ENCODE measurements at regions of chr2 and their contacts with region 1.

Region 1: GRCh38 chr2:197705121-197705911 is at the start of gene MARS2:
- DNase-seq: peak; percentile 95
- H3K4me3 ChIP-seq: peak within 1 kb of the TSS; percentile 90
- H3K27ac ChIP-seq: peak within 1 kb of the TSS; percentile 47
- H3K4me1 ChIP-seq: peaks cover 26% of the 10 kb centered on the region
- CTCF ChIP-seq: no peak
- total RNA-seq, gene MARS2: 23.2 and 32.7 TPM in 2 replicates

Region 2: GRCh38 chr2:196639180-196640030 is 1065.9 kb before region 1 on chr2 and contains the start of gene CCDC150:
- CTCF ChIA-PET with region 1: no interaction called
- POLR2A ChIA-PET with region 1: no interaction called
- intact Hi-C with region 1: loop called (anchors 10 kb)
- DNase-seq: peak; percentile 96
- H3K4me3 ChIP-seq: peak within 1 kb of the TSS; percentile 95
- H3K27ac ChIP-seq: no peak within 1 kb of the TSS
- H3K4me1 ChIP-seq: peaks cover 11% of the 10 kb centered on the region
- CTCF ChIP-seq: 0 out of 2 replicates have a peak, but pooled peaks have one; percentile 19
- total RNA-seq, gene CCDC150: 39.5 and 40.8 TPM in 2 replicates

Region 3: GRCh38 chr2:197434541-197435513 is 270.5 kb before region 1 on chr2 and contains the start of gene SF3B1:
- CTCF ChIA-PET with region 1: no interaction called
- POLR2A ChIA-PET with region 1: interaction called, 6 read pairs
- intact Hi-C with region 1: loop called (anchors 5 kb)
- DNase-seq: peak; percentile 99
- H3K4me3 ChIP-seq: peak within 1 kb of the TSS; percentile 99
- H3K27ac ChIP-seq: peak within 1 kb of the TSS; percentile 76
- H3K4me1 ChIP-seq: peaks cover 42% of the 10 kb centered on the region
- CTCF ChIP-seq: no peak
- total RNA-seq, gene SF3B1: 162 and 198 TPM in 2 replicates

Region 4: DNA sequence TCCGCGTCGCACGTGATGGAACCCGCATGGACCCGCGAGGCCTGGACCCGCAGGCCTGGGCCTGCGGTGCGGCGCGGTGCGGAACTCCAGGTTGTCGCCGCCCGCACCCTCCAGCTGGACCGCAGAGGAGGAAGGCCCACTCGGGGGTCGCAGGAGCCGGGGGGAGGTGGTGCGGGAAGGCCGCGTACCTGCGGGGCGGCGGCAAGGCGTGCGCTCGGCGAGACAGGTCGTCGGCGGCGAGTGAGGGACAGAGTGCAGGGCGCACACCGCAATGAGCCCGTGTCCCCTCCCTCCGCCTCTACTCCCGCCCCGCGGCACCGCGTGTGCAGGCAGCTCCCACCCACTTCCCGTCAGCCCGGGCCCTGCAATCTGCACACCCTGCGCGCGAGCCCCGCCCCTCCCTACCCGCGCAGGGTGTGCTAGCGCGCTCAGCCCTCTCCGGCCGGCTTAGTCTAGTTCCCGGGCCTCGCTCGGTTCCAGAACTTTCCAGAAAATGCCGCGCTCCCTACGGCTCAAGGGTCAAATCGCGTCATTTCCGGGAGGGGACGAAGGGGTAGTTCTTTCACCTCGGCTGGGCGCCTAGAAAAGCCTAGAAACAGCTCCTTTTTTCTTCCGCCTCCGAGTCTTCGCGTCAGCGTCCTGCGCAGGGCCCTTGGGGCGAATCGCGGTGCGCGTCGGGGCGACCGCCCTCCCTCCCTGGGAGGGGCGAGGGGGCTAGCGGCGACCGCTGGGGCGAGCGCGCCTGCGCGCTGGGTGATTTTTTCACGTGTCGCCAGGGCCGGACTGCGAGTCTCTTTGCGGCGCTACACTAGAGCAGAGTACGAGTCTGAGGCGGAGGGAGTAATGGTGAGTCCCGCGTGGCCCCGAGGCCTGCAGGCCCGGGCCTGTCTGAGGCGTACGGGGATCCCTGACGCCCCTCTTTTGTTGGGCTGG is 205.5 kb before region 1 on chr2 and contains the starts of genes HSPD1 and HSPE1:
- CTCF ChIA-PET with region 1: interaction called, 3 read pairs
- POLR2A ChIA-PET with region 1: interaction called, 5 read pairs
- intact Hi-C with region 1: loop called (anchors 2 kb)
- DNase-seq: peak; percentile 99
- H3K4me3 ChIP-seq: peak within 1 kb of the TSS; percentile 83
- H3K27ac ChIP-seq: peak within 1 kb of the TSS; percentile 77
- H3K4me1 ChIP-seq: peaks cover 55% of the 10 kb centered on the region
- CTCF ChIP-seq: no peak
- total RNA-seq, gene HSPD1: 370 and 405 TPM in 2 replicates
- total RNA-seq, gene HSPE1: 189 and 314 TPM in 2 replicates

Region 5: GRCh38 chr2:197777823-197778407 is 72.6 kb after region 1 on chr2:
- CTCF ChIA-PET with region 1: interaction called, 3 read pairs
- POLR2A ChIA-PET with region 1: no interaction called
- intact Hi-C with region 1: loop called (anchors 1 kb)
- DNase-seq: peak; percentile 47
- H3K4me3 ChIP-seq: no peak overlapping the region
- H3K27ac ChIP-seq: no peak overlapping the region
- H3K4me1 ChIP-seq: no peaks in the 10 kb centered on the region
- CTCF ChIP-seq: peak; percentile 98

Region 6: GRCh38 chr2:197799068-197799467 is 93.8 kb after region 1 on chr2:
- CTCF ChIA-PET with region 1: no interaction called
- POLR2A ChIA-PET with region 1: no interaction called
- intact Hi-C with region 1: no loop called
- DNase-seq: no peak
- H3K4me3 ChIP-seq: no peak overlapping the region
- H3K27ac ChIP-seq: no peak overlapping the region
- H3K4me1 ChIP-seq: peaks cover 2% of the 10 kb centered on the region
- CTCF ChIP-seq: no peak

Region 7: GRCh38 chr2:197838036-197838435 is 132.7 kb after region 1 on chr2:
- CTCF ChIA-PET with region 1: no interaction called
- POLR2A ChIA-PET with region 1: no interaction called
- intact Hi-C with region 1: no loop called
- DNase-seq: no peak
- H3K4me3 ChIP-seq: no peak overlapping the region
- H3K27ac ChIP-seq: no peak overlapping the region
- H3K4me1 ChIP-seq: no peaks in the 10 kb centered on the region
- CTCF ChIP-seq: no peak

Measured in OCI-LY7 (cell line).